ENCODE measurements at regions of chr9 and their contacts with region 1.

Region 1: GRCh38 chr9:113737517-113738271 is 138.4 kb upstream of the ZNF618 start:
- DNase-seq: no peak
- ATAC-seq: no peak
- H3K4me3 ChIP-seq: no peak overlapping the region
- H3K27ac ChIP-seq: no peak overlapping the region
- H3K4me1 ChIP-seq: no peaks in the 10 kb centered on the region
- H3K27me3 ChIP-seq: no peaks in the 10 kb centered on the region

Region 2: DNA sequence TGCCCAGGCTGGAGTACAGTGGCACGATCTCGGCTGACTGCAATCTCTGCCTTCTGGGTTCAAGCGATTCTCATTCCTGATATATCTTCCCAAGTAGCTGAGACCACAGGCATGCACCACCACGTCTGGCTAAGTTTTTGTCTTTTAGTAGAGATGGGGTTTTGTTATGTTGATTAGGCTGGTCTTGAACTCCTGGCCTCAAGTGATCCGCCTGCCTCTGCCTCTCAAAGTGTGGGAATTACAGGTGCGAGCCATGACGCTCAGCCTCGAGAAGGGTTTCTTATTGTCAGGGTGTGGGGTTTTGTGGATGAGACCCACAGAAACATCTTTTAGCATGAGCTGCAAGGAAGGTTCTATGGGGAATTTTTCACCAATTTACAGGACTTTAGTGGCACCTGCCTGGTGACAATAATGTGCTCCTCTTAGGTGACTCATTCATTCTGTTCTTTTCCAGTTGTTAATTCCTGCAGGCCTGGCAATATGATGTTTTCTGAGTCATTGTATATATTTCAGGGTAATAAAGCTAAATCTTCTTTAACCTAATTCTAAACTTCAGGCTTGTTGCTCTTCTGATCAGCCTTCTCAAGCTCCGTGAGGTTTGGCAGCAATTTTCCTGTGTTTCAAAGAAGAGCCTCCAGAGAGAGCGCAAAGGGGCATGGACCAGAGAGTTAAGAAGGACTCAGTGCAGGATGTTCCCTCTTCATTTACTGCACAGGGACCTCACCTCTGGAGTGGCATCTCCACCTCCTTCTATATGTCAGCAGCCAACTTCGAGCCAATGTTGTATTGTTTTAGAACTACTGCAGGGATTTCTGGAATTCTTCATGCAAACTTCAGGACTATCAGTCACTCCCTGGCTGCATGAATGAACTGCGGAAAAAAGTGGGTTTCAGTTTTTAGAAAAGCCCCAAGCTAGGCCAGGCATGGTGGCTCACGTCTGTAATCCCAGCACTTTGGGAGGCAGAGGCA is 60.7 kb after region 1 on chr9:
- intact Hi-C with region 1: no loop called
- DNase-seq: no peak
- ATAC-seq: no peak
- H3K4me3 ChIP-seq: no peak overlapping the region
- H3K27ac ChIP-seq: no peak overlapping the region
- H3K4me1 ChIP-seq: no peaks in the 10 kb centered on the region
- H3K27me3 ChIP-seq: no peaks in the 10 kb centered on the region

Region 3: GRCh38 chr9:114059047-114059803 is 321.5 kb after region 1 on chr9:
- intact Hi-C with region 1: loop called in 1 of 4 experiments (anchors 10 kb)
- DNase-seq: peak; percentile 34 to 76 (median 64)
- ATAC-seq: peak; percentile 38 to 58
- H3K4me3 ChIP-seq: no peak overlapping the region
- H3K27ac ChIP-seq: no peak overlapping the region
- H3K4me1 ChIP-seq: peaks cover 2% of the 10 kb centered on the region
- H3K27me3 ChIP-seq: no peaks in the 10 kb centered on the region